MCF 10A (cell line): ENCODE measurements at regions of chr11 and their contacts with region 1.

Region 1: DNA sequence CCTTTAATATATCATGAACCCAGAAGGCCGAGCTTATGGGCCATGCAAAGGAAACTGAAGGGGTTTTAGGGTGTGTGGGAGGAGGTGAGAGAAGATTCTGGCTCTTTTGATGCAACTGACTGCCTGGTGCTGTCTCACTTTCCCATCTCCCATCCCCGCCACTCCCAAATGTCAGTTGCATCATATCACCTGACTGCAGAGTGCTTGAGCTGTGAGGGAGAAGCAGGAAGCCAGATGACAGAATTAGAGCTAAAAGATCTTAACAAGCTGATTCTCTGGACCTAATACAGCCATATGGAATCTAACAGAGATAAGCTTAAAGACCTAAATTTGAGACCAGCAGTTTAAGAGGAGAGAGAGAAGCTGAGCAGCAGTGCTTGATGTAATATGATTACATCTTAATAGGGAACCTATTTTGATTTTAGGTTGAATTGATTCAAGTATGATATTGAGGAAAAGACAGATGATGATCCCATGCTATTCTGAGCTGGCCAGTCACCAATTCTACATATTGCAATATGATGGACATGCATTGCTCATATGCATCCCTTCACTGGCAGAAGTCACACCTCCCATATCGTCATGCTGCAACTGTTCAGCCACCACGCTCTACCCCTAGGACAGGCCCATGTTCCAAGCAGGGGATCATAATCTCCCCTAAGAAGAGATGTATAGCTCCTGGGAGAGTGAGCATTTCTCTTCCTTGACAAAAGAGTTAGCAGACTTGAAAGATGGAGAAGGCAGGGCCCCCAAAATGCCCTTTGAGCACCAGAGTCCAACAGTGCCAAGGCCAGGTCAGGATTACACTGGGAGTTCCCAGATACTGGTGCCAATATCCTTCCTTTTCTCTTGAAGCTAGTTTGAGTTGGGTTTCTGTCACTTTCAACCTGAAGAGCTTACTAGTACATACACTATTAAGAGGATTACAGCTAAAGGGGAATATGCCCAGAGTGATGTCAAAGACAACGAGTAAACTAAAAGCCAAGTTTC is 44.9 kb downstream of the PLEKHA7 start:
- DNase-seq: peak; percentile 31
- H3K4me3 Mint-ChIP-seq: no peak overlapping the region
- H3K27ac Mint-ChIP-seq: no peak overlapping the region
- H3K4me1 Mint-ChIP-seq: peaks cover 6% of the 10 kb centered on the region
- H3K27me3 Mint-ChIP-seq: no peaks in the 10 kb centered on the region
- CTCF ChIP-seq: no peak

Region 2: DNA sequence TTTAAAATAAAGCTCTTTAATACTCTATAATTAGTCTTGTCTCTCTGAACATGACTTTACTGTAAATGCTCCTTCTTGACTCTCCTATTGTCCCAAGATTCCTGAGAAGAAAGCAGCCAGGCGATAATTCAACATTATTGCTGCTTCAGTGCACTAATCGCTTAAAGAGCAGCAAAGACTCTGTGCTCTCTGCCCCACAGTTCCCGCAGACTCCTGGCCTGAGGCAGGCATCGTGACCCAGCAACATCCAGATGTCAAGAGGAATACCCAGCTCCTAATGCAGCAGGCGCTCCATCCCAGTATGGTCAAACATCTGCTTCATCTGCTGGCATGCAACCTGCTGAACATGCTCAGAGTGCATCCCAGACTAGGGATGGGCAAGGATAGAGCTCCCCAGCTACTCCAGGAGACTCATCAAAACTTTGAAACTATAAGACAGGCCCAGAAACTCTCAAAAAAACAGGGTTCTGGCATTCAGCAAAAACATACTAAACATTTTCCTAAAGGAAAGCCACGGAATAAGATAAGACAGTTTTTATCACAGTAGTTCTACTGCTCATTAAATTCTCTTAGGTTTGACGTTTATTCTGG is 883.0 kb before region 1 on chr11:
- CTCF ChIA-PET with region 1: no interaction called
- POLR2A ChIA-PET with region 1: no interaction called
- intact Hi-C with region 1: no loop called
- DNase-seq: no peak
- H3K4me3 Mint-ChIP-seq: no peak overlapping the region
- H3K27ac Mint-ChIP-seq: no peak overlapping the region
- H3K4me1 Mint-ChIP-seq: no peaks in the 10 kb centered on the region
- H3K27me3 Mint-ChIP-seq: no peaks in the 10 kb centered on the region
- CTCF ChIP-seq: no peak

Region 3: GRCh38 chr11:16956538-16957153 is 12.7 kb before region 1 on chr11:
- CTCF ChIA-PET with region 1: interaction called, 10 read pairs
- POLR2A ChIA-PET with region 1: interaction called, 4 read pairs
- intact Hi-C with region 1: no loop called
- DNase-seq: peak; percentile 51
- H3K4me3 Mint-ChIP-seq: no peak overlapping the region
- H3K27ac Mint-ChIP-seq: no peak overlapping the region
- H3K4me1 Mint-ChIP-seq: peaks cover 7% of the 10 kb centered on the region
- H3K27me3 Mint-ChIP-seq: no peaks in the 10 kb centered on the region
- CTCF ChIP-seq: no peak